ENCODE measurements at regions of chr6 and their contacts with region 1.

Region 1: DNA sequence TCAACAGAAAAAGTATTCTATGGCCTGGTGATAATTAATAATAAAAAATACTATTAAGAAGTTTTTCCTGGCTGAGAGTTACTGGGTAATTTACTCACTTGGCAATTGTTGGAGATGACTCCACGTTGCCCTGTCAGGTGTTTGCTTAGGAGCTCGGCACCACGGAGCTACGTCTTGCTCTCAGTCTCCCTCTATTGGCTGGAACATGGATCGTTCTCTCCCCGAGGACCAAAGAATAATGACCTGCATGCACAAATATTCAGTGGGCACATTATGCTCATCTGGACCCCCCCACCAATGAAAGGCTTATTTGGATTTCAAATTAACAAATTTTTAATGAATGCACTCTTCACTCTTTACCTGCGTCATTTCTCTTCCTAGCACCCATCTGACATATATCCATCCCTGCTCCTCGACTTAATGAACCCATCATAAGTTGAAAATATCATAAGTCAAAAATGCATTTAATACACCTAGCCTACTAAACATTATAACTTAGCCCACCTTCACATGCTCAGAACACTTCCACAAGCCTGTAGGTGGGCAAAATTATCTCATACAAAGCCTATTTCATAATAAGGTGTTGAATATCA is 71.0 kb upstream of the CD83 start:
- DNase-seq: peak; percentile 23 to 66
- H3K4me3 ChIP-seq: no peak overlapping the region
- H3K27ac ChIP-seq: no peak overlapping the region
- H3K4me1 ChIP-seq: no peaks in the 10 kb centered on the region
- H3K27me3 ChIP-seq: no peaks in the 10 kb centered on the region; a peak in 1 of 7 replicates
- CTCF ChIP-seq: peak; percentile 71 to 80 (median 79)
- EP300 ChIP-seq: no peak
- POLR2A ChIP-seq: no peak
- RAD21 ChIP-seq: peak; percentile 70 to 77

Region 2: DNA sequence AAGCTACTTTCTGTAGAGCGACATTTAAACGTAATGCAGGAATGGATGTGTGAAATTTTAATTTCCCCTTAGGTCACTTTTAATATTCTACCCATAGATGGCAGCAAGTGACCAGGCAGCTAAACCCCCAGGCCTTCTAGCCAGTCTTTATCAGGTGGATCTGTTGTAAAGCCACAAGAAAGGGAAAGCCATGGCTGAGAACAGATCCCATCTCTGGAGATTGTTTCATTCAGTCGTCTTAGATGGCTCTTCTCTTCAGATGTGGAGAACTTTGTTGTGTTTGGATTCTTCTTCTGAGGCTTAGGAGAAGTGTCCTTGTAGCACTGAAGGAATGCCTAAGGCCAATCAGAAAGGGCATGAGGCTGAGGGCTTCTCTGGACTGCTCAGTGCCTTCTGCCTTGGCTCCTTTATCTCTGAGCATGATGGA is 137.6 kb before region 1 on chr6:
- CTCF ChIA-PET with region 1: interaction called, 126 read pairs
- POLR2A ChIA-PET with region 1: no interaction called
- DNase-seq: no peak
- H3K4me3 ChIP-seq: no peak overlapping the region
- H3K27ac ChIP-seq: no peak overlapping the region
- H3K4me1 ChIP-seq: peaks cover 0 to 6% (median 0%) of the 10 kb centered on the region in 4 experiments; a peak in 1 of 7 replicates
- H3K27me3 ChIP-seq: no peaks in the 10 kb centered on the region
- CTCF ChIP-seq: peak in 2 of 3 experiments; percentile 72 to 87; a peak in 3 of 4 replicates
- EP300 ChIP-seq: no peak
- POLR2A ChIP-seq: no peak
- RAD21 ChIP-seq: peak; percentile 98

Region 3: GRCh38 chr6:13924146-13924948 is 122.2 kb before region 1 on chr6:
- CTCF ChIA-PET with region 1: interaction called, 133 read pairs
- POLR2A ChIA-PET with region 1: no interaction called
- DNase-seq: peak in 1 of 2 experiments; percentile 87
- H3K4me3 ChIP-seq: peak overlapping the region; percentile 57 to 90 (median 76)
- H3K27ac ChIP-seq: 0 out of 2 replicates have a peak overlapping the region, but pooled peaks have one; percentile 6
- H3K4me1 ChIP-seq: peaks cover 0 to 4% (median 3%) of the 10 kb centered on the region in 4 experiments; a peak in 3 of 7 replicates
- H3K27me3 ChIP-seq: no peaks in the 10 kb centered on the region; a peak in 3 of 7 replicates
- CTCF ChIP-seq: no peak
- EP300 ChIP-seq: no peak
- POLR2A ChIP-seq: peak in 1 of 2 experiments; percentile 14; a peak in 1 of 3 replicates
- RAD21 ChIP-seq: no peak

Region 4: DNA sequence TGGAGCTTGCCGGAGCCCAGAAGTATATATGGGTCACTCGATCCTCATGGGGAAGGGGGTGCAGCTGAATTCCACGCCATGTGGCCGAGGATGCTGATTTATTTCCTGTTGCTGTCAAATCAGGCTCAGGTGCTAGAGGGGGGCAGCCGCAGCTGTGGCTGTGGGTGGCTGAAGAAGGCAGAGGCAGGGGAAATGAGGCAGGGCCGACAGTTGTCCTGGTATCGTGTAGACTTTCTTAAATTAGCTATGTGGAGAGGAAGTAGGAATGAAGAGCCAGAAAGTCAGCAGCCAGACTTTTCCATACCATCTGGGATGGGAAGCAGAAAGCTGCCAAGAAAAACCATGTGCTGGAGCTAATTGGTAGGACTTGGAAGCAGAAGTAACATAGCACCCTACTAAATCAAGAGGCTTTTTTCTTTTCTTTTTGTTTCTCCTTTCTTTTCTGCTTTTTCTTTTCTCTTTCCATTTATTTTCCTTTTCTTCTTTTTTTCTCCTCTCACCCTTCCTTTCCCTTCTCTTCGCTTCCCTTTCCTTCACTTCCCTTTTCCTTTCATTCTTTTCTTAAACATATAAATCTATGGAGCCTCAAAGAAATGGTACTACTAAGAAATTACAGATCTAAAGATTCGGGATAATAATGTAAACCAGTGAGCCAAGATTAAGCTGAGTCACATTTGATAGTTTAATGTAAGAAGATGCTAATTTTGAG is 19.6 kb before region 1 on chr6:
- CTCF ChIA-PET with region 1: interaction called, 189 read pairs
- POLR2A ChIA-PET with region 1: no interaction called
- DNase-seq: no peak
- H3K4me3 ChIP-seq: no peak overlapping the region
- H3K27ac ChIP-seq: no peak overlapping the region
- H3K4me1 ChIP-seq: peaks cover 3 to 13% (median 7%) of the 10 kb centered on the region in 4 experiments
- H3K27me3 ChIP-seq: peaks cover 0 to 2% (median 0%) of the 10 kb centered on the region in 4 experiments; a peak in 2 of 7 replicates
- CTCF ChIP-seq: no peak
- EP300 ChIP-seq: no peak
- POLR2A ChIP-seq: no peak
- RAD21 ChIP-seq: no peak

Region 5: DNA sequence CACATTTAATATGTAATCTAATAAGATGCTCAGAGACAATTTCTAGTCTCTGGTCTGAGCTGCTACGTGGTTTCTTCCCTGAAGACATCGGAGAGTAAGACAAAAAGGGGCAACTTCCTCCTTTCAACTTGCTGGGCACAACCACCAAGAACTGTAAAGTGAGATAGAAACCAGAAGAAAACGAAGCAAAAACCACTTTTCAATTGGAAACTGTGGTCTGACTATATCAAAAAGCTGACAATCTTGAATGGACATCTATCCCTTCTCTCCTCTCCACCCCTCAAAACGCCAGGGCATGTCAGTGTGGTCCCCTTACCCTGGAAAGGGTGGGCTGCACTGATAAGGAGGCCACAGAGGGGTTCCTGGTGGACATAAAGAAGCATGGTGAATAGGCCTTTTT is 340.1 kb after region 1 on chr6:
- CTCF ChIA-PET with region 1: no interaction called
- POLR2A ChIA-PET with region 1: no interaction called
- DNase-seq: no peak
- H3K4me3 ChIP-seq: no peak overlapping the region
- H3K27ac ChIP-seq: no peak overlapping the region
- H3K4me1 ChIP-seq: peaks cover 3 to 25% (median 21%) of the 10 kb centered on the region in 4 experiments; a peak in 5 of 7 replicates
- H3K27me3 ChIP-seq: no peaks in the 10 kb centered on the region
- CTCF ChIP-seq: no peak
- EP300 ChIP-seq: no peak
- POLR2A ChIP-seq: no peak
- RAD21 ChIP-seq: no peak